ENCODE measurements at regions of chr10 and their contacts with region 1.

Region 1: DNA sequence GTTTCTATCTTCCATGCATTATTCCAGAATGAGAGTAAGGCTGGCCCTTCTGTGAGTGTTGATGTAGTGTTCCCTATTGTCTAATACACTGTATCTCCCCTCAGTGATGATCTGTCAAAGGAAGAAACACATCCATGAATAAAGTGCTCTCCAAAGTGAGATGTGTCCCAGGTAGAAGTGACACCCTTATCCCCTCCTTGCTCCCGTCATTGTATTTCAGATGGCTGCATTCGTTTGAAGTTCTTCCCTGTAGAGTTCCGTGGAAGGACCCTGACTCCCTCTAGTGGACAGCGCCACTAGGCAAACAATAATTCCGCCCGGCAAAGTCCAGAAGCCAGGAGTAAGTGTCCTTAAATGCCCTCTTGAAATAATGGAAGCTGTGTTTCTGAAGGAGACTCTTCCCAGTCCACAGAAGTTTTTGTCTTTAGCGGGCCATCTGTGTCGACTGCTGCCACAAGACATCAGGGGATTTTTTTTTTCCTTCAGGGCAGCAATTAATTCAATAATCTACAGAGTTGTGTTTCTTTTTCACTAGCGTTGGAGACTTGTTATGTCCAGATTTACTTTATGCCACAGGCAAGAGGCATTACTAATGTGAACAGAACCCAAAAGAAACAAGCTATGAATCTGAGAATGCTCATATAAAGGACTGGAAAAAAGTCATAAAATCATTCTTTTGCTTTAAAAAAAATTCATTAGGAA is 64.6 kb downstream of the THNSL1 start:
- DNase-seq: peak; percentile 79
- ATAC-seq: peak; percentile 98
- H3K4me3 ChIP-seq: no peak overlapping the region
- H3K27ac ChIP-seq: no peak overlapping the region
- H3K4me1 ChIP-seq: peaks cover 0 to 8% of the 10 kb centered on the region in 2 experiments; a peak in 2 of 4 replicates
- H3K27me3 ChIP-seq: no peaks in the 10 kb centered on the region
- CTCF ChIP-seq: peak; percentile 87 to 95 (median 93)
- POLR2A ChIP-seq: no peak
- RAD21 ChIP-seq: peak; percentile 96

Region 2: GRCh38 chr10:24617771-24618391 is 463.1 kb before region 1 on chr10:
- CTCF ChIA-PET with region 1: interaction called, 13 read pairs
- POLR2A ChIA-PET with region 1: no interaction called
- RAD21 ChIA-PET with region 1: no interaction called
- intact Hi-C with region 1: no loop called
- DNase-seq: peak; percentile 45
- ATAC-seq: peak; percentile 96
- H3K4me3 ChIP-seq: no peak overlapping the region
- H3K27ac ChIP-seq: no peak overlapping the region
- H3K4me1 ChIP-seq: peaks cover 0 to 9% of the 10 kb centered on the region in 2 experiments; a peak in 1 of 4 replicates
- H3K27me3 ChIP-seq: no peaks in the 10 kb centered on the region
- CTCF ChIP-seq: peak; percentile 67 to 96 (median 95); a peak in 5 of 6 replicates
- POLR2A ChIP-seq: no peak
- RAD21 ChIP-seq: peak; percentile 61

Region 3: GRCh38 chr10:24724381-24725228 is 356.4 kb before region 1 on chr10:
- CTCF ChIA-PET with region 1: interaction called, 3 read pairs
- POLR2A ChIA-PET with region 1: no interaction called
- RAD21 ChIA-PET with region 1: no interaction called
- intact Hi-C with region 1: loop called (anchors 2 kb)
- DNase-seq: peak; percentile 92
- ATAC-seq: peak; percentile 85
- H3K4me3 ChIP-seq: peak overlapping the region; percentile 76 to 77
- H3K27ac ChIP-seq: peak overlapping the region; percentile 90
- H3K4me1 ChIP-seq: peaks cover 3 to 14% of the 10 kb centered on the region in 2 experiments; a peak in 3 of 4 replicates
- H3K27me3 ChIP-seq: no peaks in the 10 kb centered on the region
- CTCF ChIP-seq: no peak
- POLR2A ChIP-seq: peak; percentile 78
- RAD21 ChIP-seq: no peak

Region 4: GRCh38 chr10:25026463-25026862 is 54.6 kb before region 1 on chr10:
- CTCF ChIA-PET with region 1: interaction called, 5 read pairs
- POLR2A ChIA-PET with region 1: no interaction called
- RAD21 ChIA-PET with region 1: no interaction called
- intact Hi-C with region 1: loop called (anchors 2 kb)
- DNase-seq: no peak
- ATAC-seq: no peak
- H3K4me3 ChIP-seq: no peak overlapping the region
- H3K27ac ChIP-seq: no peak overlapping the region
- H3K4me1 ChIP-seq: peaks cover 0 to 8% of the 10 kb centered on the region in 2 experiments; a peak in 2 of 4 replicates
- H3K27me3 ChIP-seq: no peaks in the 10 kb centered on the region
- CTCF ChIP-seq: peak; percentile 8 to 48 (median 22); a peak in 3 of 6 replicates
- POLR2A ChIP-seq: no peak
- RAD21 ChIP-seq: peak; percentile 65

Region 5: DNA sequence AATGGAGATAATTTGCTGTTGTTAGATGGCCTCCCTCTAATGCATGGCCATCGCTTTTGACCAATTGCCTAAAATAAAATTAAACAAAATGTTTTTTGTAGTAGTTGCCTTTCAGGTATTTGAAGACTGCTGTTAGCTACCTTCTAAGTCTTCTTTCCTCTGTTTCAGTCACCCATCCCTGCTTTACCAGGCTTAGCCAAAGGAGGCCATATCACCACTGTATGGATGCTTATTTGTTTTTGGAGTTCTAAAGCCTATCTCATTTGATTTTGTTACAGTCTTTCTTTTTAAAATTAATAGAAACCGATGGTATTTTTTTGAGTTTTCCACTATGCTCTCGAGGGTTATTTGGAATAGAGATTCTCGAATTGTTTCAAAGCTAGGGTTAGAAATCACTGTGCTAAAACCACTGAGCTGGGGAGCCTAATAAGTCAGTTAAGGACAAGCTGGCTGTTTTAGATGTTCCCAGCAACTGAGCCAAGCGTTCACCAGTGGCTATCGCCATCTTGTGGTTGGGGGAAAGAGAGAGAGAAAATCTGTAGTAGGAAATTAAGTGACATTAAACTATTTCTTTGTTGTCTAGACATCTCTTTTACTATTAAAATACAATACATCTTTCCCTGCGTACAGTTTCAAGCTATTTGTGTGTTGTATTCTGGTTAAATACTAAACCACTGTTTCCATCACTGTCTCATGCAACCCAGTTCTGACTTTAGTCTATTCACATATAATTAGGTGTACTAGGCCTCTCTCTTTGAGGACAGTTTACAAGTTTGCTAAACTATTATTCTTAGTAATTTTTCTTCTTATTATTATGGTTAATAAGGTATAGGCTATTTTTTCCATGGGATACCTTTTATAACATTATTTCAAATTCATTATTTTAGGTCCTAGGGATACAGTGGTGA is 146.0 kb after region 1 on chr10:
- CTCF ChIA-PET with region 1: interaction called, 8 read pairs
- POLR2A ChIA-PET with region 1: no interaction called
- RAD21 ChIA-PET with region 1: no interaction called
- intact Hi-C with region 1: loop called (anchors 1 kb)
- DNase-seq: peak; percentile 48
- ATAC-seq: peak; percentile 88
- H3K4me3 ChIP-seq: no peak overlapping the region
- H3K27ac ChIP-seq: no peak overlapping the region
- H3K4me1 ChIP-seq: no peaks in the 10 kb centered on the region
- H3K27me3 ChIP-seq: no peaks in the 10 kb centered on the region
- CTCF ChIP-seq: peak; percentile 67 to 83 (median 78)
- POLR2A ChIP-seq: no peak
- RAD21 ChIP-seq: peak; percentile 78

Measured in HCT116 (cell line).